ENCODE measurements at regions of chr11 and their contacts with region 1.

Region 1: DNA sequence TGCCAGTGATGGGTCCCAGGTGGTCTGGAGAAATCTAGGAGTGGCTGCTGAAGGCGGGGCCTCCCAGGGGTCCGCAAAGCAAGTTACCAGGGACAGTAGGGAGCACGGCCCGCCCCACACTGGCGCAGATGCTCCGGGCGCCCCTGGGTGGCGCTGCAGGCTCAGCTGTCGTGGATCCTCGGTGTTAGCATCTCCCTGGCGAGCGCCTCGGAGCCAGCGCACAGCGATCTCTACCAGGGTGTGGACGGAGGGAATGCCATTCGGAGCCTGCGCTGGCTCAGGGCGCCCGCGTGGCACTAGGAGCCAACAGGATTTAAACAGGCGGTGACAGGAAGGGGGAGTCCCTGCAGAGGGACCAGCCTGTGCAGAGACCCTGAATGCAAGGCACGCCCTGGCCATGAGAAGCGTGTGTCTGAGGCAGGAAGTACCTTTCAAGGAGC is 20.2 kb downstream of the FADS3 start:
- DNase-seq: peak; percentile 82 to 91
- H3K4me3 ChIP-seq: no peak overlapping the region
- H3K27ac ChIP-seq: peak overlapping the region; percentile 58 to 74
- H3K4me1 ChIP-seq: peaks cover 0 to 50% (median 36%) of the 10 kb centered on the region in 4 donors
- H3K27me3 ChIP-seq: no peaks in the 10 kb centered on the region
- CTCF ChIP-seq: peak; percentile 98 to 99

Region 2: DNA sequence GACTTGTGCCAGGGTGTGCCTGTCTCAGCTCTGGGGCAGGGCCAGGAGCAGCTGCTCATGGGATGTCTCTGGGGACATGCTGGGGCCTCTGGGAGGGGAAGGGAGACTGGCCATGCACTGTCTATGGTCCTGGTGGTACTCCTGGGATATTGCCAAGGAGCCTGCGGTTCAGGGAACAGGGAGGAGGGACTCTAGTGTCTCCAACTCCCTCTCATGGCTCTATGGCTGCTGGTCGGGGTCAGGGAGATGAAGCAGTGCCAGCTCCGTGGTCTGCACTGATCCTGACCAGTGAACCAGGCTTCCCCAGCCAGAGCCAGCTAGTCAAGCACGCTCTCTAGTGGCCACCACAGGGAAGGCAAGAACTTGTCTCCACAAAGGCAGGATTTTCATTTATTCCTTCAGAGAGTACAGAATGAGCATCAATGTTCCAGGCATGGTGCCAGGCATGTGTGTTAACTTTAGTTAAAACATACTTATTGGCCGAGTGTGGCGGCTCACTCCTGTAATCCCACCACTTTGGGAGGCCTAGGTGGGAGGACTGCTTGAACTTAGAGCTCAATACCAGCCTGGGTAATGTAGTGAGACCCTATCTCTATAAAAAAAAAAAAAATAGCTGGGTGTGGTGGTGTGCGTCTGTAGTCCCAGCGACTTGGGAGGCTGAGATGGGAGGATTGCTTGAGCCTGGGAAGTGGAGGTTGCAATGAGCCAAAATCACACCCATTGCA is 76.5 kb after region 1 on chr11:
- intact Hi-C with region 1: loop called (anchors 2 kb)
- DNase-seq: peak; percentile 96 to 97
- H3K4me3 ChIP-seq: no peak overlapping the region
- H3K27ac ChIP-seq: peak overlapping the region; percentile 41 to 64
- H3K4me1 ChIP-seq: peaks cover 0 to 31% (median 22%) of the 10 kb centered on the region in 4 donors
- H3K27me3 ChIP-seq: no peaks in the 10 kb centered on the region
- CTCF ChIP-seq: peak; percentile 93